ENCODE measurements at regions of chr10 and their contacts with region 1.

Region 1: DNA sequence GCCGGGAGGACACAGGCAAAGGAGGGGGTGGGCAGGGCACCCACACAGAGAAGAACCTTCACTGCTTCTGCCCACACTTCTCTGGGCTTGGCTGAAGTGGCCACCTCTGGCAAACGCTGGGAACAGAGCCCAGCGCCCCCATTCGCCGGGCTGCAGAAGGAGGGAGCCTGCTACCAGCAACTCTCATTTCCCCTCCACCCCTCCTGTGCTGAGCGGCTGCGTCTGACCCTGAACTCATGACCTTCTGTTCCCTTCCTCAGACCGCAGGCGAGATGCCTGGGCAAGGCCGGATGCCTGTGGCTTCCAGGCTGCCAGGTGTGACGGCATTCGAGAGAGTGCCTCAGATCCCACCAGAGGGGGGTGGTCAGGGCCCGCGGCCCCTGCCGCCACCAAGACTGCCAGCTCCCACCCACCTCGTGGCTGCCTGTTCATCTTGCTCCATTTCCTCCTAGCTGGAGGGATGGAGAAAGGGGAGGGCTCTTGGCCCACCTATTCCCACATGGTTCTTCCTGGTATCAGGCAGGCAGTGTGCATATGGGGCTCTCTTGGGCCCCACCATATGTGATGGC is 19.8 kb downstream of the DNAJB12 start:
- DNase-seq: peak; percentile 94
- ATAC-seq: peak; percentile 46

Region 2: DNA sequence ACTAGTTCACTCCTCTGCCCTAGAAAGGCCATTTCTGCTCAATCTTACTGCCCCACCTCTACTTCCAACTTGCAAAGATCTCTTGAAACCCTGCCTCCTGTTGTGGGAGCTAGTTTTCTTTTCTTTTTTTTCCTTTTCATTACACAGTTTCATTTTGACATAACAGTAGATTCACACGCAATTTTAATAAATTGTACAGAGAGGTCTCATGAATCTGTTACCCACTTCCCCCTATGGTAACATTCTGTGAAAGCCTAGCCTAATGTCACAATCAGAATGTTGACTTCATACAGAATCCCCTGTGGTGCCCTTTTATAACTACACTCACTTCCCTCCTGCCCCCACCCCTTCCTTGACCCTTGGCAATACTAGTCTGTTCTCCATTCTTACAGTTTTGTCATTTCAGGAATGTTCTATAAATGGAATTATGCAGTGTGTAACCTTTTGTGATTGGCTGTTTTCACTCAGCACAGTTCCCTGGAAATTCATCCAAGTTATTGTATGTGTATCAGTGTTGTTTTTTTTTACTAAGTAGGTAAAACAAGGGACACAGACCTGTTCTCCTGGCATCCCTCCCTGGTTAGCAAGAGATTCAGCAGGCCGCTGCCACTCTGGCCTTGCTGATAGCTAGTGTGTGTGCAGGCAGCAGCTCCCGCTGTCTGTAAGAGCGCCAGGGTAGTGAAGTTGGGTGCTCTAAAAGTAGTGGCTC is 349.2 kb before region 1 on chr10:
- intact Hi-C with region 1: no loop called
- DNase-seq: peak; percentile 86
- ATAC-seq: peak; percentile 69

Region 3: DNA sequence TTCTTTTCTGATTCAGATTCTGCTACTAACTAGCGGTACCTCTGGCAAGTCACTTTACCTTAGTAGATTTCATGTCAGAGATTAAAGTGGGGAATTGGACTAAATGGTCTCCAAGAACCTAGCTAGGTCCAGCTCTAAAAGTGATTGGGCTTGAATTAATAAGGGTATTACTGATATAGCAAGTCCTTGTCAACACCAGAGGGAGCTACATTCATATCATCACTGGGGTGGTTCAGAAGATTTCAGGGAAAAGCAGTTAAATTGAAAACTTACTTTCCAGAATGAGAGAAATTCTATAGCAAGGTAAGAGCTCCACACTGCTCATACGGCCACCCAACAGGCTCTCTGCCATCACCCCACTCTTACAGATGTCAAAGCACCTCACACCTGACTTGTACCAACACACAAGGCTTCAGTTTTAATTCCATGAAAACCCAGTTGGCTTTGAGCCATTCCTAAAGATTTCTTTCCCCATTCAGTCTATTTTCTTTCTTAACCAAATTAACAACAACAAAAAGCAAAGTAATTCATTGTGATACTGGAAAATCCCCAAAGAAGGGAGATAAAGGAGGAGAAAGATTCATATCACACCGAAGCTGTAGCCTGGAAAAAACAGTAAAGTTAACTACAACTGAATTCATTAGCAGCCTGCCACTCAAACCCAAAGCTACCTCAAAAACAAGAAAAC is 208.6 kb before region 1 on chr10:
- intact Hi-C with region 1: loop called (anchors 2 kb)
- DNase-seq: no peak
- ATAC-seq: no peak

Region 4: DNA sequence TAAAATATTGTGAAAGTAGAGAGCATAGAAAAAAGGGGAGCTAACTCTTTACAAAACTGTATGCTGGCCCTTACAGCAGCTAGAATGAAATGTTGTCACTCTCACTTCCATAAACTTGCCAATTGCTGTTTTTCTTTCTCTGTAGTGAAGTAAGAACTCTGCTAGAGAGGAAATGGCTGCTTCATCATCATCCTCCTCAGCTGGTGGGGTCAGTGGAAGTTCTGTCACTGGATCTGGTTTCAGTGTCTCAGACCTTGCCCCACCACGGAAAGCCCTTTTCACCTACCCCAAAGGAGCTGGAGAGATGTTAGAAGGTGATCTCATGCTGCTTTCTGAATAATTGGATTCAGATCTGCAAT is 111.2 kb before region 1 on chr10:
- intact Hi-C with region 1: loop called (anchors 2 kb)
- DNase-seq: no peak
- ATAC-seq: peak; percentile 24

Measured in Right ventricle myocardium inferior (tissue), 1 donor.